ENCODE measurements at regions of chr15 and their contacts with region 1.

Region 1: DNA sequence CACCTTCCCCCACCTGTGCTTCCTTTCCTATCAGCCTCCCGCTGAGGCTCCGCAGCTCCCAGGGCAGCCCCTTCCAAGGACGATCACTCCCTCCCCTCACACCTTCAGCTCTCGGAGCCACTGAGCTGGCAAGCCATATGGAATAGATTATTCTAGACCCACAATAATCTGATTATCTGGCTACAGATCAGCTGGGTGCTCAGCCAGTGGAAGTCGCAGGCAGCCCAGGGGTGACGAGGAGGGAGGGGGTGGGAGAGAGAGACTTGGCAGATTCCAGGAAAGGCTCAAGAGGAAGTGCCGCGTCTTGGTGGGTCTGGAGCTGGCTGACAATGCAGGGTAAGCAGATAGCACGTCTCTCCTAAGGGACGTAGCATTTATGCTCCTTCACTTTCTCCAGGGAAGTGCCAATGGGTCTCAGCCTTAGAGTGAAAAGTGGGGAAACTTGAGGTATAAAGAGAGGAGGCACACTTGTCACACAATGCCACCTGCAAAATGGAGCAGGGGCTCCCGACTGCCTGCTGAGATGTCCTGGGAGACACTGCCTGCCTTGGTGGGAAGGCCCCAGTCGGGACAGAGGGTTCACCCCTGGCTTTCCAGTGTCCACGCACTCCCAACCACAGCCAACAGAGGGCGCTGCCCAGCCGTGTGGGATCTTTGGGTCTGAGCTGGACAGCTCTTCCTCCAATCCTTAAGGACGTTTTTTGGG is 9.4 kb upstream of the MESP1 start:
- DNase-seq: no peak
- ATAC-seq: peak; percentile 97
- H3K4me3 ChIP-seq: no peak overlapping the region
- H3K27ac ChIP-seq: no peak overlapping the region
- H3K4me1 ChIP-seq: peaks cover 11% of the 10 kb centered on the region
- H3K27me3 ChIP-seq: no peaks in the 10 kb centered on the region
- CTCF ChIP-seq: peak; percentile 93 to 97 (median 97)
- EP300 ChIP-seq: no peak
- POLR2A ChIP-seq: no peak
- RAD21 ChIP-seq: peak; percentile 94

Region 2: GRCh38 chr15:89614164-89614563 is 146.3 kb before region 1 on chr15:
- CTCF ChIA-PET with region 1: no interaction called
- POLR2A ChIA-PET with region 1: no interaction called
- RAD21 ChIA-PET with region 1: no interaction called
- SMC1A ChIA-PET with region 1: no interaction called
- in situ Hi-C with region 1: no loop called
- intact Hi-C with region 1: no loop called
- DNase-seq: no peak
- ATAC-seq: no peak
- H3K4me3 ChIP-seq: no peak overlapping the region
- H3K27ac ChIP-seq: no peak overlapping the region
- H3K4me1 ChIP-seq: no peaks in the 10 kb centered on the region
- H3K27me3 ChIP-seq: no peaks in the 10 kb centered on the region
- CTCF ChIP-seq: no peak
- EP300 ChIP-seq: no peak
- POLR2A ChIP-seq: no peak
- RAD21 ChIP-seq: no peak

Region 3: DNA sequence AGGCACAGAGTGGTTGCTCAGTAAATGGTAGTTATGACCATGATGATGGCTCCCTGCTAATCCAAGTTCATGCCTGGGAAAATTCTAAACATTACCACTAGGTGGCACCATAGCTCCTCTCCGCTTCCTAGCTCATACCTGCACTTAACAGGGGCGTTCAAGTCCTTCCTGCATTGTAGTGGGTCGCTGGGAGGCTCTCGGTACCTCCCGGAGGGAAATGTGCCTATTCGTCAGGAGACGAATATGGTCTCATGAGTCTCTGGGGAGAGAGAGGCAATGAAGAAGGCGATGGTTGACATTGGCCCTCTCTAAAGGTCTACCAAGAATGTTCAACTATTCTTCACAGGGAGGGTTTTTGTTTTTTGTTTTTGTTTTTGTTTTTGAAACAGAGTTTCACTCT is 20.3 kb before region 1 on chr15:
- CTCF ChIA-PET with region 1: interaction called, 17 read pairs
- POLR2A ChIA-PET with region 1: no interaction called
- RAD21 ChIA-PET with region 1: interaction called, 6 read pairs
- SMC1A ChIA-PET with region 1: interaction called, 5 read pairs
- in situ Hi-C with region 1: no loop called
- intact Hi-C with region 1: no loop called
- DNase-seq: peak; percentile 43
- ATAC-seq: peak; percentile 98
- H3K4me3 ChIP-seq: no peak overlapping the region
- H3K27ac ChIP-seq: no peak overlapping the region
- H3K4me1 ChIP-seq: no peaks in the 10 kb centered on the region
- H3K27me3 ChIP-seq: no peaks in the 10 kb centered on the region
- CTCF ChIP-seq: peak; percentile 86 to 91 (median 91); a peak in 5 of 6 replicates
- EP300 ChIP-seq: no peak
- POLR2A ChIP-seq: no peak
- RAD21 ChIP-seq: peak; percentile 82

Region 4: DNA sequence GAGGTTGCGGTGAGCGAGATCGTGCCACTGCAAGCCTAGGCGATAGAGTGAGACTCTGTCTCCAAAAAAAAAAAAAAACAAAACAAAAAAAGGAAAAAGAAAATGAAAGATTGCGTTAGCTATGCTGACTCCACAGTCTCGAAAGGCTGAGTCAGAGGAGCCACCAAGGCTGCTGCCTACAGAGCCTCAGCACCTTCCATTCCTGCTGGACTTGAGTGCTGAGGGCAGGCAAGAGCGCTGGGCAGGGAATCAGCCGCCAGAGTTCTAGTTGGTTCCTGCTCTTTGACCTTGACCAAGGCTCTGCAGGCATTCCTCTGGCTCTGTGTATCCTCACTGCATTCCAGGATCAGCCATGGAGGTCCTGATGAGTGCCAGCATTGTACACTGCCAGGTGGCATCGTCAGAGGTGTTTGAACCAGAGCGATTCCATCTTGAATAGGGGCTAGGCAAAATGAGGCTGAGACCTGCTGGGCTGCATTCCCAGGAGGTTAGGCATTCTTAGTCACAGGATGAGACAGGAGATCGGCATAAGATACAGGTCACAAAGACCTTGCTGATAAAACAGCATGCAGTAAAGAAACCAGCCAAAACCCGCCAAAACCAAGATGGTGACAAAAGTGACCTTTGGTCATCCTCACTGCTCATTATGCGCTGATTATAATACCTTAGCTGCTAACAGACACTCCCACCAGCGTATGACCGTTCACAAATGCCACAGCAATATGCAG is 21.6 kb after region 1 on chr15:
- CTCF ChIA-PET with region 1: interaction called, 14 read pairs
- POLR2A ChIA-PET with region 1: interaction called, 3 read pairs
- RAD21 ChIA-PET with region 1: interaction called, 3 read pairs
- SMC1A ChIA-PET with region 1: interaction called, 6 read pairs
- in situ Hi-C with region 1: no loop called
- intact Hi-C with region 1: no loop called
- DNase-seq: no peak
- ATAC-seq: peak; percentile 69
- H3K4me3 ChIP-seq: 0 out of 2 replicates have a peak overlapping the region, but pooled peaks have one; percentile 24
- H3K27ac ChIP-seq: no peak overlapping the region
- H3K4me1 ChIP-seq: peaks cover 23% of the 10 kb centered on the region
- H3K27me3 ChIP-seq: no peaks in the 10 kb centered on the region
- CTCF ChIP-seq: no peak
- EP300 ChIP-seq: no peak
- POLR2A ChIP-seq: no peak
- RAD21 ChIP-seq: no peak

Region 5: GRCh38 chr15:89888214-89888804 is 127.9 kb after region 1 on chr15:
- CTCF ChIA-PET with region 1: interaction called, 54 read pairs
- POLR2A ChIA-PET with region 1: no interaction called
- RAD21 ChIA-PET with region 1: interaction called, 15 read pairs
- SMC1A ChIA-PET with region 1: interaction called, 23 read pairs
- in situ Hi-C with region 1: no loop called
- intact Hi-C with region 1: no loop called
- DNase-seq: no peak
- ATAC-seq: peak; percentile 55; the same call in 2 of the 3 replicates
- H3K4me3 ChIP-seq: no peak overlapping the region
- H3K27ac ChIP-seq: no peak overlapping the region
- H3K4me1 ChIP-seq: peaks cover 14% of the 10 kb centered on the region
- H3K27me3 ChIP-seq: no peaks in the 10 kb centered on the region
- CTCF ChIP-seq: peak; percentile 32 to 38 (median 35); a peak in 3 of 6 replicates
- EP300 ChIP-seq: no peak
- POLR2A ChIP-seq: no peak
- RAD21 ChIP-seq: peak; percentile 46

Region 6: DNA sequence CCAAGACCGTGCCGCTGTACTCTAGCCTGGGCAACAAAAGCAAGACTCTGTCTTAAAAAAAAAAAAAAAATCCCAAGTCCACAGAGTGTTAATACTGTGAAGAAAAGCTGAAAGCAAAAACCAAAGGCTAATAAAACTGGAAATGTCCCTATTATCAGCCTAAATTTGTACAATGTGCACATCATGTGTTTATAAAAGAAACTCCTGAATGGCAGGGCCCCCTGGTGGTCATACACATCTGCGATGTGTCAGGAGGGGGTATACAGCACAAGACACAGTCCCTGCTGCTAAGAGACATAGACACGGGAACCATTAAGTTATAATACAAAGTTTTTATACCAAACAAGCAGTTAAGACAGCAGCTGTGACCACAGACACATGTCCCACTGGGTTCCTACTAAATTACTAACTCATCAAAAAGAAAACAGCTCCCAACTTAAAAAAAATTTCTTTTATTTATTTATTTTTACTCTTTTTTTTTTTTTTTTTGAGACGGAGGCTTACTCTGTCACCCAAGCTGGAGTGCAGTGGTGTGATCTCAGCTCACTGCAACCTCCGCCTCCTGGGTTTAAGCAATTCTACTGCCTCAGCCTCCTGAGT is 310.9 kb after region 1 on chr15:
- CTCF ChIA-PET with region 1: interaction called, 15 read pairs
- POLR2A ChIA-PET with region 1: no interaction called
- RAD21 ChIA-PET with region 1: interaction called, 11 read pairs
- SMC1A ChIA-PET with region 1: interaction called, 4 read pairs
- in situ Hi-C with region 1: no loop called
- intact Hi-C with region 1: no loop called
- DNase-seq: peak; percentile 54
- ATAC-seq: peak; percentile 98
- H3K4me3 ChIP-seq: no peak overlapping the region
- H3K27ac ChIP-seq: no peak overlapping the region
- H3K4me1 ChIP-seq: no peaks in the 10 kb centered on the region
- H3K27me3 ChIP-seq: no peaks in the 10 kb centered on the region
- CTCF ChIP-seq: peak; percentile 79 to 89 (median 81)
- EP300 ChIP-seq: no peak
- POLR2A ChIP-seq: no peak
- RAD21 ChIP-seq: peak; percentile 95

Measured in GM12878 (cell line).